ENCODE measurements at regions of chr11 and their contacts with region 1.

Region 1: GRCh38 chr11:16820324-16821092 is 82.1 kb downstream of the C11orf58 start:
- DNase-seq: peak; percentile 66
- ATAC-seq: peak; percentile 72
- H3K4me3 ChIP-seq: no peak overlapping the region
- H3K4me3 Mint-ChIP-seq: no peak overlapping the region
- H3K27ac ChIP-seq: no peak overlapping the region
- H3K27ac Mint-ChIP-seq: no peak overlapping the region
- H3K4me1 ChIP-seq: peaks cover 0 to 4% of the 10 kb centered on the region in 2 donors
- H3K4me1 Mint-ChIP-seq: peaks cover 7% of the 10 kb centered on the region
- H3K27me3 ChIP-seq: no peaks in the 10 kb centered on the region
- H3K27me3 Mint-ChIP-seq: no peaks in the 10 kb centered on the region
- CTCF ChIP-seq: peak; percentile 96

Region 2: GRCh38 chr11:16809886-16810668 is 10.4 kb before region 1 on chr11:
- CTCF ChIA-PET with region 1: interaction called, 20 read pairs
- POLR2A ChIA-PET with region 1: no interaction called
- intact Hi-C with region 1: no loop called
- DNase-seq: no peak
- ATAC-seq: no peak
- H3K4me3 ChIP-seq: no peak overlapping the region
- H3K4me3 Mint-ChIP-seq: no peak overlapping the region
- H3K27ac ChIP-seq: no peak overlapping the region
- H3K27ac Mint-ChIP-seq: no peak overlapping the region
- H3K4me1 ChIP-seq: no peaks in the 10 kb centered on the region
- H3K4me1 Mint-ChIP-seq: peaks cover 2% of the 10 kb centered on the region
- H3K27me3 ChIP-seq: no peaks in the 10 kb centered on the region
- H3K27me3 Mint-ChIP-seq: no peaks in the 10 kb centered on the region
- CTCF ChIP-seq: no peak

Region 3: GRCh38 chr11:16831316-16832192 is 11.0 kb after region 1 on chr11:
- CTCF ChIA-PET with region 1: interaction called, 12 read pairs
- POLR2A ChIA-PET with region 1: no interaction called
- intact Hi-C with region 1: no loop called
- DNase-seq: no peak
- ATAC-seq: no peak
- H3K4me3 ChIP-seq: no peak overlapping the region
- H3K4me3 Mint-ChIP-seq: no peak overlapping the region
- H3K27ac ChIP-seq: no peak overlapping the region
- H3K27ac Mint-ChIP-seq: no peak overlapping the region
- H3K4me1 ChIP-seq: no peaks in the 10 kb centered on the region
- H3K4me1 Mint-ChIP-seq: no peaks in the 10 kb centered on the region
- H3K27me3 ChIP-seq: no peaks in the 10 kb centered on the region
- H3K27me3 Mint-ChIP-seq: no peaks in the 10 kb centered on the region
- CTCF ChIP-seq: no peak

Region 4: GRCh38 chr11:16924826-16925560 is 104.5 kb after region 1 on chr11:
- CTCF ChIA-PET with region 1: no interaction called
- POLR2A ChIA-PET with region 1: no interaction called
- intact Hi-C with region 1: loop called (anchors 5 kb)
- DNase-seq: peak; percentile 22
- ATAC-seq: no peak
- H3K4me3 ChIP-seq: peak overlapping the region in 4 of 5 experiments; percentile 24 to 54 (median 41)
- H3K4me3 Mint-ChIP-seq: peak overlapping the region; percentile 76
- H3K27ac ChIP-seq: no peak overlapping the region
- H3K27ac Mint-ChIP-seq: no peak overlapping the region
- H3K4me1 ChIP-seq: peaks cover 25 to 28% of the 10 kb centered on the region in 2 donors
- H3K4me1 Mint-ChIP-seq: peaks cover 30% of the 10 kb centered on the region
- H3K27me3 ChIP-seq: peaks cover 0 to 21% (median 13%) of the 10 kb centered on the region in 4 experiments
- H3K27me3 Mint-ChIP-seq: peaks cover 15% of the 10 kb centered on the region
- CTCF ChIP-seq: no peak

Region 5: DNA sequence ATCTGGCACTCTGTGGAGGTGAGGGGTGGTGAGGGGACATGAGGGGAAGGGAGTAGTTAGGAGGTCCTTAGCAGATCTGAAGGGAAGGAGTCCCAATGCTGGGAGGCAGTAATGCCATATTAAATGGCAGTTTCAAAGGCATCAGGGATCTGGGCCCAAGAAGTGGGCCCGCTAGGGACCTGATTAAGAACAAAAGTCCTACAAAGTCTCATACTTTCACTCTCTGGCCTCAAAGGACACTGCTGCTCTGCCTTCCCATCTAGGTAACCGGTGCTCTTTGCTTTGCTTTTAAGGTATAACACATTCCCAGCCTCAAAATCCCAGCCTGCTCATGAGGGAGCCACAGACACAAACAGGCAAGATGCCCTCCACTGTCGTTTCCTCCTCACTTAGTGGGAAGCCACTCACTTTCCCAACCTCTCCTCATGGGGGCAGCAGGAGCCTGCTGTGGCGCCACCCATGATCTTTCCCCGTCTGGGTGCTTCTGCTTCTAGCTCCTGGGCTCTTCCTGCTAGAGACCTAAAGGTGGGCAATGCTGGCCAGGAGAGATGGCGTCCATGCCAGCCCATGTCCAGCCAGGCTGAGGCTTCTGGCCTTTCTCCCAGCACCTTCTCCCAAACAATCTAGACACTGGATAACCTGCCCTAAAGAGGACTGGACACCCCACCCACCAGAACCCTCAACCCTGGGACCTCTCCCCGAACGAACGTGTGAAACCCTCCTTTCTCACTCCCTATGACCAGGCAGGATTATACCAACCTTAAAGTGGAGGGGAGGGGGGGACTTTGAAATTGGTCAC is 125.4 kb after region 1 on chr11:
- CTCF ChIA-PET with region 1: interaction called, 4 read pairs
- POLR2A ChIA-PET with region 1: no interaction called
- intact Hi-C with region 1: loop called (anchors 5 kb)
- DNase-seq: peak; percentile 51
- ATAC-seq: peak; percentile 69
- H3K4me3 ChIP-seq: peak overlapping the region in 3 of 5 experiments; percentile 4 to 28 (median 24)
- H3K4me3 Mint-ChIP-seq: peak overlapping the region; percentile 66
- H3K27ac ChIP-seq: peak overlapping the region; percentile 7 to 29
- H3K27ac Mint-ChIP-seq: peak overlapping the region; percentile 44
- H3K4me1 ChIP-seq: peaks cover 14 to 15% of the 10 kb centered on the region in 2 donors
- H3K4me1 Mint-ChIP-seq: peaks cover 17% of the 10 kb centered on the region
- H3K27me3 ChIP-seq: peaks cover 0 to 3% (median 0%) of the 10 kb centered on the region in 4 experiments
- H3K27me3 Mint-ChIP-seq: no peaks in the 10 kb centered on the region
- CTCF ChIP-seq: peak; percentile 27

Region 6: DNA sequence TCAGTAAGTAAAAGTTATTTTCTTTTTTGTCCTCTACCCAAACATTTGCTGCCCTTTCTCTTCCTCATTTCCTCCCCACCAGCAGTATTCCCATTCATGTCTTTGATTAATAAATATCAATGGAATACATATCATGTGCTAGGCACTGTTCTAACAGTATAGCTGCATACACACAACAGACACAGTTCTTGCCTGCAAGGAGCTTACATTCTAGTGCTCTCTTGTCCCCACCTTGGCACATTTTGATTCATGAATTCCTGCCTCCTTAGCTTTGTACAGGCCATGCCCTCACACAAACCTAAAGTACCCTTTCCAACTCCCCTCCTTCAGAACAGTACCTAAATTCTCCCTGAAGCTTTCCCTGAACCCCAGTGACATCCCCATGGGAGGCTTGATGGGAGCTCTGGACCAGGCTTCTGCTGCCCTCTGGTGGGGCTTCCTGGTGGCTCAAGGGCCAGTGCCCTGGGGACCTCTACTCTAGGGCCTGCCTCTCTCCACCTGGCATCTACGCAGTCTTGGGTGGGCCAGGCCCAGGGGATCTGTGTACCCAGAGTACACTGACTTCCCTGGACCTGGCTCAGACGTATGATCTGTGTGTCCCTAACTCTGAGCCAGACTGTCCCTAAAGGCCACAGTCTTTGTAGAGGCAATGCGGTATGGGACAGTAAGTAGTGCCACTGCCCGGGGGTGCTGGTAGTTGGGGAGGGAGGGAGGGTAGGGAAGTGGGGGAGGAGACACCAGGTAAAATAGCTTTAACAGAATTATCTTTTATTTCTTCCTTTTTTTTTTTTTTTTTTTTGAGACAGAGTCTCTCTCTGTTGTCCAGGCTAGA is 242.9 kb after region 1 on chr11:
- CTCF ChIA-PET with region 1: interaction called, 83 read pairs
- POLR2A ChIA-PET with region 1: no interaction called
- intact Hi-C with region 1: loop called (anchors 1 kb)
- DNase-seq: peak; percentile 48
- ATAC-seq: peak; percentile 57
- H3K4me3 ChIP-seq: no peak overlapping the region
- H3K4me3 Mint-ChIP-seq: no peak overlapping the region
- H3K27ac ChIP-seq: no peak overlapping the region
- H3K27ac Mint-ChIP-seq: no peak overlapping the region
- H3K4me1 ChIP-seq: no peaks in the 10 kb centered on the region
- H3K4me1 Mint-ChIP-seq: no peaks in the 10 kb centered on the region
- H3K27me3 ChIP-seq: no peaks in the 10 kb centered on the region
- H3K27me3 Mint-ChIP-seq: no peaks in the 10 kb centered on the region
- CTCF ChIP-seq: peak; percentile 28

Region 7: GRCh38 chr11:17504330-17505107 is 684.0 kb after region 1 on chr11:
- CTCF ChIA-PET with region 1: interaction called, 6 read pairs
- POLR2A ChIA-PET with region 1: no interaction called
- intact Hi-C with region 1: loop called (anchors 1 kb)
- DNase-seq: peak; percentile 79
- ATAC-seq: peak; percentile 68
- H3K4me3 ChIP-seq: no peak overlapping the region
- H3K4me3 Mint-ChIP-seq: no peak overlapping the region
- H3K27ac ChIP-seq: no peak overlapping the region
- H3K27ac Mint-ChIP-seq: no peak overlapping the region
- H3K4me1 ChIP-seq: no peaks in the 10 kb centered on the region
- H3K4me1 Mint-ChIP-seq: no peaks in the 10 kb centered on the region
- H3K27me3 ChIP-seq: no peaks in the 10 kb centered on the region
- H3K27me3 Mint-ChIP-seq: peaks cover 9% of the 10 kb centered on the region
- CTCF ChIP-seq: peak; percentile 82